Activated naive CD4-positive, alpha-beta T cell treated with anti-CD3 and anti-CD28 coated beads for 36 hours (primary cell): ENCODE measurements at regions of chr13 and their contacts with region 1.

Region 1: DNA sequence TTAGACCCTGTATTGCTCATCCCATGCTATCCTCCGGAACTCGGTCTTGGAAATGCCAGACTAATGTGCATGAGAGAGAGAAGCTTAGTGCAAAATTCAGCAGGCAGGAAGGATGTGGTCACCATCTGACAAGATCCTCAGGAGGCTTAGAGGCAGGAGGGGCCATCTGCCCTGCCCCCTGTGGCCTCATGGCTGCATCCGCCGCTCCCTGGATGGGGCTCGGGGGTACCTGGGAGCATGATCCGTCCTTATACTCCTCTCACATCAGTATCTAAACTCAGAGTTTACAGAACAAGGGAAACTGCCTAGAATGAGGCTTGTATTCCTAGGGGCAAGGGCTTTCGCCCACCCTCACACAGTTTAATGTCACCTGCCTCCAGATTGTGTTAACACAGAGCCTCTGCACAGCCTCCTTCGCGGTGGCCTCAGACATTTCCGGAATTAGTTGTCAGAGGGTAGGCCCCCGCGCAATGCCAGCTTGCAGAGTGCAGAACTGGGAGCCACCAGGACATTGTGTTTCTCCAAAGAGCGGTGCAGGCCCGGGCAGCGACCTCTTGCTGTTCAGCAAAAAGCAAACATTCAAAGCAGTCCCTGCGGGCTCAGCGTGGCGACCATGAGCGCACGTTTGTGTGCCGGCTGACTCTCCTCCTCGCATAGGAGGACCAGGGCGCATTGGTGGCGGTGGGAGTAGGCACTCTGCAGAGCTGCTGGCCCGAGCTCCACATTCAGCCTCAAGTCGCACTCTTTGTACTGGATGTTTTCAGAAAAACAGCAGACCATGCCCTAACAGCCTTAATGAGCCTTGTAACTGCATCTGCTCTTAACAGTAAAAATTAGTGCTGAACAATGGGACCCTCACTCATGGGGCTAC is 39.1 kb downstream of the GPR12 start:
- DNase-seq: peak; percentile 63
- H3K4me3 Mint-ChIP-seq: peak overlapping the region; percentile 56
- H3K27ac Mint-ChIP-seq: no peak overlapping the region
- H3K4me1 Mint-ChIP-seq: peaks cover 18% of the 10 kb centered on the region
- H3K27me3 Mint-ChIP-seq: no peaks in the 10 kb centered on the region

Region 2: GRCh38 chr13:26785838-26786630 is 64.5 kb after region 1 on chr13:
- CTCF ChIA-PET with region 1: no interaction called
- intact Hi-C with region 1: loop called (anchors 5 kb)
- DNase-seq: peak; percentile 70
- H3K4me3 Mint-ChIP-seq: peak overlapping the region; percentile 75
- H3K27ac Mint-ChIP-seq: no peak overlapping the region
- H3K4me1 Mint-ChIP-seq: peaks cover 13% of the 10 kb centered on the region
- H3K27me3 Mint-ChIP-seq: no peaks in the 10 kb centered on the region

Region 3: DNA sequence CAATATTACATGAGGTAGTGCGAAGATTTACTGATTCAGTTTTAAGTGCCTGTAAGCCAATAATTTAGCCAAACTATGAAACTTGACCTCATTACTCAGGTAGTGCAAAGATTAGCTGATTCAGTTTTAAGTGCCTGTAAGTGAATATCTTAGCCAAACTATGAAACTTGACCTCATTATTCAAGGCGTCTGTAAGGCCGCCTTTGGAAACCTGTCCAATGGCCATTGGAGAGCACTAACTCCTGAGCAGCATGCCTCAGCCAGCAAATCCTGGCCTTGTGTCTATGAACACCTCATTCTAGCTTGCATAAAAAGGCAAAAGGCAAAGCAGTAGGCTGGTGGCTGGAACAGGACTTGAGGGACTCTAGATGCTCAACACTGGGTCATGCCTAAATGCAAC is 166.1 kb after region 1 on chr13:
- CTCF ChIA-PET with region 1: no interaction called
- intact Hi-C with region 1: no loop called
- DNase-seq: no peak
- H3K4me3 Mint-ChIP-seq: no peak overlapping the region
- H3K27ac Mint-ChIP-seq: no peak overlapping the region
- H3K4me1 Mint-ChIP-seq: no peaks in the 10 kb centered on the region
- H3K27me3 Mint-ChIP-seq: peaks cover 10% of the 10 kb centered on the region